Heart left ventricle (tissue), 16 donors: ENCODE measurements at regions of chr13 and their contacts with region 1.

Region 1: DNA sequence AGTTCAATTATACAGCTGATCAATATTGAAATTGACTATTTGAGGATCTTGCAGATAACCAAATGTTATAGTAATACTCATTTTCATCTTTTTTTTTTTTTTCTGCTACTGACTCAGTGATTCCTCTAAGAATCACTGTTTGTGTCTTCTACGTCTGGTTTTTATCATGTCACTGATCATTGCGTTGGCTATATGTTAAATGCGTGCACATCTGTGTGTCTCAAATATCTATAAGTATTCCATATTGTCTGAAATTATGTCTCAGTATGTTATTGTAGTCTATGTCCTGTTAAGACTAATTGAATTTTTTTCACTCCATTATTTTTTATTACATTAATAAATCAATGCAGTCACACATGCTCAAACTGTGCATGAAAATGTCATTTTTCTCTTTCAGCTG is 200.5 kb downstream of the PCDH20 start:
- DNase-seq: no peak
- ATAC-seq: no peak
- H3K4me3 ChIP-seq: no peak overlapping the region
- H3K27ac ChIP-seq: no peak overlapping the region
- H3K4me1 ChIP-seq: no peaks in the 10 kb centered on the region
- H3K27me3 ChIP-seq: no peaks in the 10 kb centered on the region
- CTCF ChIP-seq: no peak
- POLR2A ChIP-seq: no peak

Region 2: GRCh38 chr13:61202042-61202441 is 13.1 kb before region 1 on chr13:
- intact Hi-C with region 1: loop called in 1 of 10 experiments (anchors 1 kb)
- DNase-seq: no peak
- ATAC-seq: no peak
- H3K4me3 ChIP-seq: no peak overlapping the region
- H3K27ac ChIP-seq: no peak overlapping the region
- H3K4me1 ChIP-seq: no peaks in the 10 kb centered on the region
- H3K27me3 ChIP-seq: no peaks in the 10 kb centered on the region
- CTCF ChIP-seq: no peak
- POLR2A ChIP-seq: no peak

Region 3: DNA sequence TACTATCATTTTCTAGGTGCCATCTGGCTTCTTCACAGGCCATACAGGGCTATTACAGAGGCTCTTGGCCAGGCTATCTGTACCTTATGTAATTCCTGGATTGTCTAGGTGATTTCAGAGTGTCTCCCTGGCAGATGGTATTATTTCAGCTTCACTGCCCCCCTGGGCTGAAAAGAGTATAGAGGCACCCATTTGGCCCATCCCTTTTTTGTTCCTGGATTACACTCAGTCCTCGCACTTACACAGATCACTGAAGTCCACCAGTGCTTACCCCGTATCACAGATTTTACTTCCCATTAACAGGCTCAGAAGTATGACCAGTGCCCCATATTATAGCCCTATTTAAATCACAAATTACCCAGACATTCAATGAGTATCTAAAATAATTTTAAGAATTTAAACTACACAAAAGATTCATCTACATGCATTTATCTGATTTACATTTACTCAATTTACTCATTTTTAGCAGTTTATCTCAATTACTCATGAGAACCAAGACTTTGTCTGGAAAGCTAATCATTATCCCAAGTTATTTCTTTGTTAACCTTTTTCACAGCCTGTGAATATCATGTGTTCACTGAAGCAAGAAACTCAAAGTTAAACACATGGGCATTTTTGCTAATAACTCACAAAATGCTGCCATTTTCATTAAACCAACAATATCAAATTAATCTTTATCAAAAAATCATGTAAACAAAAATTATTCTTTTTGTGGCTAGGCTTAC is 79.5 kb after region 1 on chr13:
- intact Hi-C with region 1: no loop called
- DNase-seq: no peak
- ATAC-seq: no peak
- H3K4me3 ChIP-seq: no peak overlapping the region
- H3K27ac ChIP-seq: no peak overlapping the region
- H3K4me1 ChIP-seq: no peaks in the 10 kb centered on the region
- H3K27me3 ChIP-seq: no peaks in the 10 kb centered on the region
- CTCF ChIP-seq: no peak
- POLR2A ChIP-seq: no peak